ENCODE measurements at regions of chr10 and their contacts with region 1.

Region 1: GRCh38 chr10:96257944-96258343 is 13.4 kb downstream of the BLNK start:
- DNase-seq: no peak
- ATAC-seq: peak; percentile 16
- H3K4me3 Mint-ChIP-seq: peak overlapping the region; percentile 48
- H3K27ac Mint-ChIP-seq: peak overlapping the region; percentile 83
- H3K4me1 Mint-ChIP-seq: peaks cover 90% of the 10 kb centered on the region
- H3K27me3 Mint-ChIP-seq: no peaks in the 10 kb centered on the region
- CTCF ChIP-seq: no peak

Region 2: GRCh38 chr10:96244354-96244753 is 13.6 kb before region 1 on chr10:
- CTCF ChIA-PET with region 1: no interaction called
- POLR2A ChIA-PET with region 1: interaction called, 18 read pairs
- intact Hi-C with region 1: loop called (anchors 1 kb)
- DNase-seq: peak; percentile 61
- ATAC-seq: peak; percentile 96
- H3K4me3 Mint-ChIP-seq: peak overlapping the region; percentile 67
- H3K27ac Mint-ChIP-seq: peak overlapping the region; percentile 91
- H3K4me1 Mint-ChIP-seq: peaks cover 80% of the 10 kb centered on the region
- H3K27me3 Mint-ChIP-seq: no peaks in the 10 kb centered on the region
- CTCF ChIP-seq: no peak

Region 3: GRCh38 chr10:96306516-96306915 is 48.6 kb after region 1 on chr10:
- CTCF ChIA-PET with region 1: no interaction called
- POLR2A ChIA-PET with region 1: no interaction called
- intact Hi-C with region 1: no loop called
- DNase-seq: peak; percentile 32
- ATAC-seq: peak; percentile 90
- H3K4me3 Mint-ChIP-seq: peak overlapping the region; percentile 24
- H3K27ac Mint-ChIP-seq: no peak overlapping the region
- H3K4me1 Mint-ChIP-seq: peaks cover 27% of the 10 kb centered on the region
- H3K27me3 Mint-ChIP-seq: peaks cover 26% of the 10 kb centered on the region
- CTCF ChIP-seq: no peak

Region 4: DNA sequence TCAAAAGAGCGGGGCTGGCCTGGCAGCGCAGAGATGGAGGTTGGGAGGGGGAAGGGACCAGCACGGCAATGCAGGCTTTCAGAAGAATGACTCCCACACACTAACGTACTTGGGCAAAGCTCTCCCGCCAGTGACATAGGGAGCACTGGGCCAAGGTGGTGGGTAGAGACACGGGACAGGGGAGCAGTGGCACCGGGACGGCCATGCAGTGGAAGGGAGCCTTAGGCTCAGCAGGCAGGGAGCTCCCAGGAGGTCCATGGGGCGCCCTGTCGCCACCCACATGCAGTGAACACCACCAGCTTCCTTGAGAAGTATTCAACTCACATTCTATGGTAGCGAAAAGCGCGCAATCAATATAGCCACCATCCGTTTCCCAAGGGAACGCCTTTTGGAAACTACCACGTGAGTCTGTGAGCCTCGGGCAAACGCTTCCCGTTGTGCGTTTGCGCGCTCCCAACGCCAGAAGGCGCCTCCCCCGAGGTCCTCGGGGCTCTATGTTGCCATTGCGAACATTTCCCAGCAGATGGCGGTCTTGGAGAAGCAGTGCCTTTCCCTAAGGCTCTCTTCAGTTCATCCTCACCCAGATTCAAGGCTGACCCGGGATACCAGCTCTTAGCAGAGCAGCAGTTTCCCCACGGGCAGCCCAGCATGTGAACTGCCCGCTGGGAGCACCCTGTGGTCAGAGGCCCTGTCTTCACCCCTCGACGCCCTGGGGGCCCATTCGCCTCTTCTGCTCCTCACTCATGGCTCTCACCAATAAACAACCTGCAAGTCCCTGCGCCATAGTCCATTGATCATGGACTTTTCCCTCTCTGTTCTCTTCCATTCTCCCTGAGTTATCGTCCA is 117.3 kb after region 1 on chr10:
- CTCF ChIA-PET with region 1: no interaction called
- POLR2A ChIA-PET with region 1: no interaction called
- intact Hi-C with region 1: no loop called
- DNase-seq: peak; percentile 61
- ATAC-seq: peak; percentile 92
- H3K4me3 Mint-ChIP-seq: peak overlapping the region; percentile 78
- H3K27ac Mint-ChIP-seq: no peak overlapping the region
- H3K4me1 Mint-ChIP-seq: peaks cover 6% of the 10 kb centered on the region
- H3K27me3 Mint-ChIP-seq: peaks cover 13% of the 10 kb centered on the region
- CTCF ChIP-seq: peak; percentile 84

Region 5: DNA sequence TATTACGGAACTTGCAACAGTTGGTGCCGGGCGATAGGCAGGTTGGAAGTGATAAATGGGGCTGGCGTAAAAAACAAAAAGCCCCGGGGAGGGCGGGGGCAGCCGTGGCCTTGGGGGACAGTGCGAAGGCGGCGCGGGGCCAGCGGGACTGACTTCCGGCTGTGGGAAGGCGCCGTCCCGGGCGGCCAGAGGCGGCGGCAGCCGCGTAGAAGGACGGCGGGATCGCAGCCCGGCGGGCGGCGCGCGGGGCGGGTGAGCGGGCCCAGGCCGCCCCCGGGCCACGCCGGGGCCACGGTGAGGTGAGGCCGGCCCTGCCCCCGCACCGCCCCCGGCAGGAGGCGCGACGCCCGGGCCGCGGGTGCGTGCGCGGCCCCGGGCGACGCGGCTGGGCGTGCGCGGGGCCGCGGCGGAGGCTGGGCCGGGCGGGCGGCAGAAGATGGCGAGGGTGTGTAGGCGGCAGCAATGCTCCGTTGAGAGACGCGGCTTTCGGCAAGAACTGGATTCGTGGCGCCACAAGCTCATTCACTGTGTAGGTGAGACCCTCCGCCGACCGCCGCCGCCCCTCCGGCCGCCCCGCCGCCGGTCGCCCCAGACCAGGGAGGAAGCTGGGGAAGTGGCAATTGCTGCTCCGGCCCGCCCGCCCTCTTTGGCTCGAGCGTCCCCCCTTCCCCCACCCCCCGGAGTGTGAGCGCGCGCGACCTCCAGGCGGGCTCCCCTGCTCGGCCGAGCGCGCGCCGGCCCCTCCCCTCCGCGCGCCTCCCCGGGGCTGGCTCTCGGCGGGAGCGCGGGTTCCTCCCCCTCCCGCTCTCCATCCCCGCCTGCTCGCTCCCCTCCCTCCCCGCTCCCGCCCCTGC is 574.1 kb after region 1 on chr10 and contains the start of gene LCOR:
- CTCF ChIA-PET with region 1: no interaction called
- POLR2A ChIA-PET with region 1: no interaction called
- intact Hi-C with region 1: no loop called
- DNase-seq: peak; percentile 87
- ATAC-seq: peak; percentile 71
- H3K4me3 Mint-ChIP-seq: peak within 1 kb of the TSS; percentile 87
- H3K27ac Mint-ChIP-seq: peak within 1 kb of the TSS; percentile 94
- H3K4me1 Mint-ChIP-seq: peaks cover 58% of the 10 kb centered on the region
- H3K27me3 Mint-ChIP-seq: no peaks in the 10 kb centered on the region
- CTCF ChIP-seq: no peak
- total RNA-seq, gene LCOR: 42.8 and 54.9 TPM in 2 replicates

Region 6: GRCh38 chr10:97128516-97129154 is 870.7 kb after region 1 on chr10:
- CTCF ChIA-PET with region 1: no interaction called
- POLR2A ChIA-PET with region 1: no interaction called
- intact Hi-C with region 1: no loop called
- DNase-seq: no peak
- ATAC-seq: no peak
- H3K4me3 Mint-ChIP-seq: no peak overlapping the region
- H3K27ac Mint-ChIP-seq: no peak overlapping the region
- H3K4me1 Mint-ChIP-seq: no peaks in the 10 kb centered on the region
- H3K27me3 Mint-ChIP-seq: peaks cover 13% of the 10 kb centered on the region
- CTCF ChIP-seq: no peak